Activated CD8-positive, alpha-beta memory T cell treated with anti-CD3 and anti-CD28 coated beads, Interleukin-2, amount 10 ng/mL, durations not matched to agents 7 days and 5 days (primary cell): ENCODE measurements at regions of chr12 and their contacts with region 1.

Region 1: GRCh38 chr12:94149119-94149780 is 873 bp downstream of the PLXNC1 start:
- DNase-seq: peak; percentile 65
- ATAC-seq: peak; percentile 47
- H3K4me3 Mint-ChIP-seq: peak overlapping the region; percentile 86
- H3K27ac Mint-ChIP-seq: no peak overlapping the region
- H3K4me1 Mint-ChIP-seq: peaks cover 13% of the 10 kb centered on the region
- H3K27me3 Mint-ChIP-seq: peaks cover 68% of the 10 kb centered on the region

Region 2: DNA sequence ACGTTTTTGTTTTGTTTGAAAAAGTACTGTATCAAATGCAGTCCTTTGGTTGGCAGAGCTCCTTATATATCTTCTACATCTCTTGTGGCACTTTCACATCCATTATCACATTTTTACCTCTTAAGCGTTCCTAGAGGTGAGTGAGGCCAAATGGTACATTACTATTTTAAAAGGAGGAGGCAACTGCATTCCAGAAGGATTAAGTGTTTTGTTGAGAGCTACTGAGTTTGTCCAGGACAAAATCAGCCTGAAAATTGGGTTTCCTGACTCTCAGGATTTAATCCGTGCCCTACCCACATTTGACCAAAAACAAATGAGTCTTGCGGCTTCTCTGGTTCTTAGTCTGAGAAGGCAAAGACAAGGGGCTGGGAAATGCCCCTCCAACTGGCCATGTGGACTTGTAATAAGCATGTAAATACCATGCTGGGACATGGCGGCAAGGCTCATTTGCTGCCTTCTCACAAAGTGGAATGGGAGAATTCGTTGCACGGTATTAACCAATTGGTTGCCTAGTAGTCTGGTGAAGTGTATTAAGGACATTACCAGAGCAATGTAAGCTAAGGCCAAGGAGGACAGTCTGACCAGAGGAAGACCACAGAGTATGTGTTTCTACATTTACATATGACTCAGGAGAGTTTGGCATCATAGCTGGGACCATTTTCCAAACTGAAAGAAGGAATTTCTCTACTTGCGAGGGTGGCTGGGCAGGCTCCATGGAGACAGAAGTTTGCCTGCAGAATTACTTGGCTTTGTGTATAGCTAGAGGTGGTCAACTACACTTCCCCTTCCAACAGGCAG is 176.6 kb before region 1 on chr12:
- CTCF ChIA-PET with region 1: no interaction called
- DNase-seq: no peak
- ATAC-seq: no peak
- H3K4me3 Mint-ChIP-seq: no peak overlapping the region
- H3K27ac Mint-ChIP-seq: no peak overlapping the region
- H3K4me1 Mint-ChIP-seq: peaks cover 8% of the 10 kb centered on the region
- H3K27me3 Mint-ChIP-seq: peaks cover 31% of the 10 kb centered on the region

Region 3: DNA sequence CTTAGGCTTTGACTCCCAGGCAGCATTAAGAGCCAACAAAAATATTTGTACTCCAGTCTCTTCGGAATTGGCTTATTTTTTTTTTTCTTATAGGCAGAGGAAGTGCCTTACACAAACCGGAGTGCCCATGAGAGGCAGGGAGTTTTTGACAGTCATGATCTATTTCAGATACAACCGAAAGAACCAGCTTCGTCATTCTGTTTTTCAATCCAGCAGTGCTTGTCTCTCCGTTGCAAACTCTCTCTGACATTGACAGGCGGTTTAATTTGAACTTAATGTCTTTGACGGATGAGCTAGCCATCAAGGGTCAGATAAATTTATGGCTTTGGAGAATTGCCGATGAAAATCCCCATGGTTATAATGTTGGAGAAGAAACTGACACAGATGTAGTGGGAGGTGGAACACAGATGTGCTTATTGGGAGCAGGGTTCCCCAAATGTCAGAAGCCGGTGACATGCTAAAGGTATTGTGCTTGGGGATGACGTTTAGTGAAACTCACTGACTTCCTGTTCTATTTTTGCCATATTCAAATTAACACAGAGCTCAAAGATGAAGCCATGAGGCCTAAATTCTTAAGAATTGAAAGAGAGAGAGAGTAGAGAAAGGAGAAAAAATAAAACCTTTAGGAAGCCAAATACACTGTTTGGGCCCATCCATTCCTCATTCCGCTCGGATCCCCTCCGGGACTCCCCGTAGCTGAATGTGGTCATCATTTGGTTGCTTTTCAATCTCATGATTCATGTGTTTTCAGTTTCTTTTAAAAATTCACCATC is 58.8 kb after region 1 on chr12:
- CTCF ChIA-PET with region 1: interaction called, 22 read pairs
- DNase-seq: peak; percentile 66
- ATAC-seq: peak; percentile 82
- H3K4me3 Mint-ChIP-seq: peak overlapping the region; percentile 70
- H3K27ac Mint-ChIP-seq: peak overlapping the region; percentile 94
- H3K4me1 Mint-ChIP-seq: peaks cover 61% of the 10 kb centered on the region
- H3K27me3 Mint-ChIP-seq: no peaks in the 10 kb centered on the region

Region 4: GRCh38 chr12:94459728-94460615 is 310.7 kb after region 1 on chr12 and contains the start of gene CEP83:
- CTCF ChIA-PET with region 1: interaction called, 10 read pairs
- DNase-seq: peak; percentile 98
- ATAC-seq: peak; percentile 99
- H3K4me3 Mint-ChIP-seq: peak within 1 kb of the TSS; percentile 91
- H3K27ac Mint-ChIP-seq: peak within 1 kb of the TSS; percentile 89
- H3K4me1 Mint-ChIP-seq: peaks cover 31% of the 10 kb centered on the region
- H3K27me3 Mint-ChIP-seq: peaks cover 10% of the 10 kb centered on the region
- total RNA-seq, gene CEP83: 17.1 to 20.1 TPM